ENCODE measurements at regions of chr12 and their contacts with region 1.

Region 1: GRCh38 chr12:54749191-54749818 is 101.1 kb upstream of the DCD start:
- DNase-seq: no peak
- ATAC-seq: no peak
- H3K4me3 ChIP-seq: no peak overlapping the region
- H3K27ac ChIP-seq: no peak overlapping the region
- H3K4me1 ChIP-seq: no peaks in the 10 kb centered on the region
- H3K27me3 ChIP-seq: no peaks in the 10 kb centered on the region

Region 2: DNA sequence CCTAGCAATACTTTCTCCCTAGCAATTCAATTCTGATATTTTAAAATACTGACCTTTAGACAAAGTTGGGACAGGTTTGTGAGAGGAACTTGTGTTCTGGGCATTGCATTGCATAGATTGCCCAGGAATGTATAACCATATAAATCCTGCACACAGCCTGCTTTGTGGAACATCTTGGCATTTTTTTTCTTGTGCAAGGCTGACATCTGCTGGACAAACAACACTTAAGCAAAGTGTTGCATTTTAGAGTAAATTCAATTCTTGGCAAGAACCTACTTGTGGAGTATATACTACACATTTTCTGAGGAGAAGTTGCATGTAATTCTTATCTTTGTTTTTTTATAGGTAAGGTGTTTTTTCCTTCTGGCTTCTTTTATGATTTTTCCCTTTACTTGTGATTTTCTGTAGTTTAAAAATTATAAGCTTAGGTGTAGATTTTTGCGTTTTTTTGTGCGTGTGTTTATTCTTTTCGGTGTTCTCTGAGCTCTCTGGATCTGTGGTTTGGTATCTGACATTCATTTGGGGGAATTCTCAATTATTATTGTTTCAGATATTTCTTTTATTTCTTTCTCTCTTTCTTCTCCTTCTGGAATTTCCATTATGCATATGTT is 208.8 kb after region 1 on chr12:
- intact Hi-C with region 1: loop called (anchors 5 kb)
- DNase-seq: no peak
- ATAC-seq: no peak
- H3K4me3 ChIP-seq: no peak overlapping the region
- H3K27ac ChIP-seq: no peak overlapping the region
- H3K4me1 ChIP-seq: no peaks in the 10 kb centered on the region
- H3K27me3 ChIP-seq: no peaks in the 10 kb centered on the region

Region 3: GRCh38 chr12:55073043-55074022 is 324.0 kb after region 1 on chr12:
- intact Hi-C with region 1: loop called in 1 of 2 experiments (anchors 10 kb)
- DNase-seq: peak; percentile 78 to 84
- ATAC-seq: peak; percentile 71
- H3K4me3 ChIP-seq: no peak overlapping the region
- H3K27ac ChIP-seq: no peak overlapping the region
- H3K4me1 ChIP-seq: no peaks in the 10 kb centered on the region
- H3K27me3 ChIP-seq: no peaks in the 10 kb centered on the region